Mammary epithelial cell (primary cell): ENCODE measurements at regions of chr3 and their contacts with region 1.

Region 1: DNA sequence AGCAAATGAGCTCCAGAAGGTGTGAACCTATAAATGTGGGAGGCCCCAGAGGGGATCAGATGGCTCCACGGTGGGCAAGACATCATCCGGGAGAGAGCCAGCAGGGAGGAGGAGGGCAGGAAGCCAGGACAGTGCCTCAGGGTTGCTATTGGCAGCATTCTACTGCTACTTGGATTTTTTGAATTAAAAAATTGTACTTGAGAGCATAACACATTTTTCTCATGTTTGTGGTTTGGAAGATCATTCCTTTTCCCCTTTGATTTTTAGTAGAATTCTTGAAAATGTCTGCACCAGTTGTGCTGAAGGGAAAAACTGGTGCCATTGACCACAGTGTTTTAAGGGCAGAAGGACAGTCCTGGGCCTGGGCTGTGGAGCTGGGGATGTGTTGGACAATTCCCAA is 59.2 kb downstream of the LYZL4 start:
- DNase-seq: no peak
- H3K4me3 ChIP-seq: no peak overlapping the region
- H3K27ac ChIP-seq: no peak overlapping the region
- H3K4me1 ChIP-seq: no peaks in the 10 kb centered on the region
- H3K27me3 ChIP-seq: peaks cover 2% of the 10 kb centered on the region
- CTCF ChIP-seq: no peak

Region 2: GRCh38 chr3:41997702-41998550 is 353.3 kb before region 1 on chr3:
- CTCF ChIA-PET with region 1: no interaction called
- dilution Hi-C with region 1: no loop called
- in situ Hi-C with region 1: no loop called
- intact Hi-C with region 1: no loop called
- DNase-seq: no peak
- H3K4me3 ChIP-seq: no peak overlapping the region
- H3K27ac ChIP-seq: no peak overlapping the region
- H3K4me1 ChIP-seq: peaks cover 3% of the 10 kb centered on the region
- H3K27me3 ChIP-seq: no peaks in the 10 kb centered on the region
- CTCF ChIP-seq: peak; percentile 43 to 44

Region 3: GRCh38 chr3:42403737-42404136 is 52.5 kb after region 1 on chr3:
- CTCF ChIA-PET with region 1: no interaction called
- dilution Hi-C with region 1: loop called (anchors 5 kb)
- in situ Hi-C with region 1: no loop called
- intact Hi-C with region 1: no loop called
- DNase-seq: peak; percentile 69
- H3K4me3 ChIP-seq: no peak overlapping the region
- H3K27ac ChIP-seq: no peak overlapping the region
- H3K4me1 ChIP-seq: peaks cover 11% of the 10 kb centered on the region
- H3K27me3 ChIP-seq: no peaks in the 10 kb centered on the region
- CTCF ChIP-seq: no peak

Region 4: DNA sequence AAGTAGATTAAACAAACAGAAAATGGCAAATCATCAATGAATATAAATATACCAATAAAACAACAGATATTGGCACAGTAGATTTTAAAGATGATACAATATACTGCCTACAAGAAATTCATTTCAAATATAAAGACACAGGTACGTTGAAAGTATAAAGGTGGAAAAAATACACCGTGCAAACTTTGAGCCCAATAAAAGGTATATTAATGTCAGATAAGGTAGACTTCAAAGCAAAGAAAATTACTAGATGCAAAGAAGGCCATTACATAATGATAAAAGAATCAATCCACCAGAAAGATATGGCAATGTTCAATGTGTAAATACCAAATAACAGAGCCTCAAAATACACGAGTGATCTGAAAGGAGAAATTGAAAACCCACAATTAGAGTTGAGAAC is 116.9 kb after region 1 on chr3:
- CTCF ChIA-PET with region 1: no interaction called
- dilution Hi-C with region 1: no loop called
- in situ Hi-C with region 1: no loop called
- intact Hi-C with region 1: no loop called
- DNase-seq: no peak
- H3K4me3 ChIP-seq: no peak overlapping the region
- H3K27ac ChIP-seq: no peak overlapping the region
- H3K4me1 ChIP-seq: peaks cover 5% of the 10 kb centered on the region
- H3K27me3 ChIP-seq: no peaks in the 10 kb centered on the region
- CTCF ChIP-seq: no peak